Calu3 (cell line): ENCODE measurements at regions of chr5 and their contacts with region 1.

Region 1: DNA sequence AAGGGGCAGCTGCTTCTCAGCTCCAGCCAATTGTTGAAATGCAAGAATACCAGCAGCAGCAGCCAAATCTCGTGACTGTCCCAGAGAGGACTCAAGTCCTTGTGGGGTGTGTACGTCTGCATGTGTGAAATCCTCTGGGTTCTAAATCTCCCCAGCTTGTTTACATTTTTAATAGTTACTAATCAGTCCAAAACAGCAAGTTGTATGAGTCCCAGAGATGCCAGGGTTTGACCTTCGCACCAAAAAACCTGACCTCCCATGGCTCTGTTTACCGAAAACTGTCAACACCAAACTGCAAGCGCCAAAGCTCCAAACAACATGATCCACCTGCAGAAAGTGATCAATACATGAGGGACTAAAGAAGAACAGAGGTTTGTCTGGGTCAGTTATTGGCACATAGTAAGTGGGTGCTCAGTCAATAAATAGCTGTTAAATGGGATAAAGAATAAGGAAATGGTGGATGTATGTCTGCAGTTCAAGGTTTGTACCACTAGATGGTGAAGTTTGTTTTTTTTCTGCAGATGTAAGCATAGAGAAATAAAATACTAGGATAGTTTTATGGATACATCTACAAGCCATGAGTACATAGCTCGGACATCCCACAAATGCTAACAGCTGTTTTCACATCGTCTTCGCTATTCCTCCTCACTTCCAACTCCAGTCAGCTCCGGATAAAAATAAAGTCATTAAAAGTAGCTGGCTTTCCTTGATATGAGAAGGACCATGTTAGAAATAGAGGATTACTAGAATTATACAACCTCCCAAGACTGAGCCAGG is 85.3 kb upstream of the ADRB2 start:
- DNase-seq: peak; percentile 44
- H3K4me3 Mint-ChIP-seq: no peak overlapping the region
- H3K27ac Mint-ChIP-seq: no peak overlapping the region
- H3K4me1 Mint-ChIP-seq: peaks cover 58% of the 10 kb centered on the region
- H3K27me3 Mint-ChIP-seq: no peaks in the 10 kb centered on the region
- CTCF ChIP-seq: peak; percentile 65

Region 2: GRCh38 chr5:148583429-148583965 is 157.7 kb before region 1 on chr5:
- CTCF ChIA-PET with region 1: no interaction called
- intact Hi-C with region 1: no loop called
- DNase-seq: no peak
- H3K4me3 Mint-ChIP-seq: no peak overlapping the region
- H3K27ac Mint-ChIP-seq: no peak overlapping the region
- H3K4me1 Mint-ChIP-seq: no peaks in the 10 kb centered on the region
- H3K27me3 Mint-ChIP-seq: peaks cover 83% of the 10 kb centered on the region
- CTCF ChIP-seq: no peak

Region 3: DNA sequence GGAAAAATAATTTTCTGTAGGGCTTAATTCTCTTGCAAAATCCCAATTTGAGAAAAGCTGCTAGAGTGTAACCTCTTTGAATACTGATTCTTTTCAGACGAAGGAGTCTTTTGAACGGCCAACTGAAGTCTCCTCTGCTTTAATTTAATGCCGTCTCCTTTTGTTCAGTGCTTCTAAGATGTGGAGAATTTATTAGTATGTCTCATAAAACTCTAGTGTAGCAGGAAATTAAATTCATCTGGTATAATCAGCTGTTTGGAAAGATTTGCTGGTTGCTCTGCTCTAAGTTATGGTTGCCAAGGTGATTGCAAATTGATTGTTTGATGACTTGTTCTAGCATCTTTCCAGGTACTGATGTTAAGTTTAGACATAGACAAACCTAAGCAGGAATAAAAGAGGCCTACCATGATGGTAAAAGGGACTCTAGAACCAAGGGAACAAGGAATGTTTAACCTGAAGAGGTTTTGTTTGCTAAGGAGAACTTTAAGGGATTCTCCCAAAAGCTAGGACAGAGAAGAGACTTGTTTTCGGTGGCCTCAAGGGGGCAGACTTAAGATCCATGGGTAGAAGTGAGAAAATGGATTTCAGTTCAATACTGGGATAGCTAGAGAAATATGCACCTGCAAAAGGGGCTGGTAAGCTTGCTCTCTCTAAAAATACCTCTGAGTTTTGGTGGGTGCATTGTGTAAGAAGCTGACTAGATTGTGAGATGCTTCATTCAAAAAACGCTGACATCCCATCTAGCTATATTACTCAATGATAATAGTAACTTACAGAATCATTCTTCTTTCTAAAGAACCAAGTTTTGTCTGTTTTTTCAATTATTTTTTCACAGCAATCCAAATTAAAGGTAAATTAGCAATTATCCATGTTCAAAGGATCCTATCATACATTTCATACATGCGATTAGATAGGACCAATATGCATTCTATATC is 79.6 kb after region 1 on chr5:
- CTCF ChIA-PET with region 1: interaction called, 12 read pairs
- intact Hi-C with region 1: no loop called
- DNase-seq: peak; percentile 64
- H3K4me3 Mint-ChIP-seq: no peak overlapping the region
- H3K27ac Mint-ChIP-seq: no peak overlapping the region
- H3K4me1 Mint-ChIP-seq: no peaks in the 10 kb centered on the region
- H3K27me3 Mint-ChIP-seq: no peaks in the 10 kb centered on the region
- CTCF ChIP-seq: peak; percentile 61

Region 4: GRCh38 chr5:148912714-148913398 is 171.7 kb after region 1 on chr5:
- CTCF ChIA-PET with region 1: interaction called, 35 read pairs
- intact Hi-C with region 1: loop called (anchors 2 kb)
- DNase-seq: peak; percentile 68
- H3K4me3 Mint-ChIP-seq: no peak overlapping the region
- H3K27ac Mint-ChIP-seq: peak overlapping the region; percentile 93
- H3K4me1 Mint-ChIP-seq: peaks cover 89% of the 10 kb centered on the region
- H3K27me3 Mint-ChIP-seq: no peaks in the 10 kb centered on the region
- CTCF ChIP-seq: peak; percentile 28

Region 5: DNA sequence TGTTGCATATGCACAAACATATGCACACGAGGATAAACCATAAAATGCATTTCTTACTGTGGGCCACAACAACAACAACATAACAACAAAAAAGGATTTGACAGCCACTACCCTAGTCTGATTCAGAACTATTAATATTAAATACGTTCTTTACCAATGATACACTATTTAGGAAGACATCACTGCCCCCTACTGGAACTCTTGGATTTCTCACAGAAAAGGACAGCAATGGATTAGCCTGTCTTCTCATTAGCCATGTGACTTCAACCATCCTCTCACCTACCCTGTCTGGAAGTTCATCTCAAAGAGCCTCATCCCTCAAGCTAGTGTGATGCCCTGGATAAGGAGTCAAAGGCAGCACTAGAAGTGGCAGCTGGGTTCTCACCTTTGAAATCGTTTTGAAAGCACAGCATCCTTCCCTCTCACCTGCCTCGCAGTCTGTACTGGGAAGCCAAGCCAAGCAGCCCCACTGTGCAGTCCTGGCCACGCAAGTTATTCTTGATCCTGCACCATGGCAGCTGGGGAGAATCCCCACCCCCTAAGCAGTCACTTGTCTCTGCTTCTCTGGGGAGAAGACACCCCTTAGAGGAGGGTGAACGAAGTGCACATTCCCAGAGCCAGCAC is 257.1 kb after region 1 on chr5:
- CTCF ChIA-PET with region 1: interaction called, 13 read pairs
- intact Hi-C with region 1: loop called (anchors 1 kb)
- DNase-seq: peak; percentile 76
- H3K4me3 Mint-ChIP-seq: no peak overlapping the region
- H3K27ac Mint-ChIP-seq: peak overlapping the region; percentile 25
- H3K4me1 Mint-ChIP-seq: peaks cover 76% of the 10 kb centered on the region
- H3K27me3 Mint-ChIP-seq: no peaks in the 10 kb centered on the region
- CTCF ChIP-seq: peak; percentile 56

Region 6: DNA sequence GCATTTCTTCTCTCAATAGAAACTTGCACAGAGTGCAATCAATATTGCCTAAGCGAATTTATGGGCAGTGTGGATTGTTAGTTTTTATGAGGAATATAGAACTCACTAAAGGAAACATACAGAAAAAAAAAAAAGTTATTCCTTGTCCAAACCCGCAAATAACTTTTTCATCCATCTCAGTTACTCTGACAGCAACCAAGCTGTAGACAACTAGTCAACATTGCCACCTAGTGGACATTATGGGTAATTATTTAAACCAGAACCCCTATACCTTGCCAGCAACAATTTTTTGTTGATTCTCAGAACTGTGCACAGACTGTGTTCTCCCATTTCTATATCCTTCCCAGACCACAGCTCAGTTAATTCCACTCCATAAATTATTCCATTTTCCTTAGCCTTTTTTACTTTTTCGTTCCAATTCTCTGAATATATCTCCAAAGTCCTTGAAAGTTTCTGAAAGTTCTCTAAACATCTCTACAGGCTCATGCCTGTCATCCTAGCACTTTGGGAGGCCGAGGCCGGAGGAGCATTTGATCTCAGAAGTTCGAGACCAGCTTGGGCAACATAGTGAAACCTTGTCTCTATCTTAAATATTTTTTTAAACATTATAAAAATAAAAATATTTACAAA is 527.9 kb after region 1 on chr5:
- CTCF ChIA-PET with region 1: interaction called, 4 read pairs
- intact Hi-C with region 1: loop called (anchors 2 kb)
- DNase-seq: peak; percentile 18
- H3K4me3 Mint-ChIP-seq: no peak overlapping the region
- H3K27ac Mint-ChIP-seq: no peak overlapping the region
- H3K4me1 Mint-ChIP-seq: peaks cover 28% of the 10 kb centered on the region
- H3K27me3 Mint-ChIP-seq: no peaks in the 10 kb centered on the region
- CTCF ChIP-seq: peak; percentile 72